HEK293 (cell line): ENCODE measurements at regions of chr17 and their contacts with region 1.

Region 1: DNA sequence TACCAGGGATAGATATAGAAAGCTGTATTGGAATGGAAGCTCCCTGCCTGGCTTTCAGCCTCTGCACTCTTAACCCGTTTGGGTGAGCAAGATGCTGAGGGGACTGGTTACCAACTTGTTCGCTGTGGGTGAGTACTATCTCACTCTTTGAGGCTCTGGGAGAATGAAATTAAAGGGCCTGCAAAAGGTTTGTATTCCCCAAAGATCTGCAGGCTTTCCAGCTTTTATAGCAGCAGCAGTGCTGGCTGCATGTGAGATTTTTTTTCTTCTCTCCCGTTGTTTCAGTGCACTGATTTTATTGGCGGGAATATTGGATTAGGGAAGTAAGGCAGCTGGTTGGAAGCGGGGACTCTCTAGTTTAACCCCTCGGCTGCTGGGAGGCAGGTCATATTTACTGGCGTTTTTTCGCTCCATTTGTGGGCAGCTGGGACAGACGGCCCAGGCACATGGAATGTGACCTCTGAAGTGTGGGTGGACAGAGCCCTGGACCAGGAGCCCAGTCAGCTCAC is 30.9 kb downstream of the C17orf75 start:
- H3K4me3 ChIP-seq: no peak overlapping the region
- H3K27ac ChIP-seq: no peak overlapping the region
- H3K4me1 ChIP-seq: no peaks in the 10 kb centered on the region
- CTCF ChIP-seq: no peak

Region 2: GRCh38 chr17:32240750-32241149 is 70.3 kb before region 1 on chr17:
- CTCF ChIA-PET with region 1: no interaction called
- POLR2A ChIA-PET with region 1: interaction called, 12 read pairs
- H3K4me3 ChIP-seq: no peak overlapping the region
- H3K27ac ChIP-seq: no peak overlapping the region
- H3K4me1 ChIP-seq: no peaks in the 10 kb centered on the region
- CTCF ChIP-seq: no peak